Activated T-helper 1 cell treated with anti-CD3 and anti-CD28 coated beads, Interleukin-12 subunit alpha, Interleukin-12 subunit beta, Interleukin-2, Interleukin-4 antibody, amounts not matched to agents 30 ng/mL and 10 ng/mL and 1 ng/mL, durations not matched to agents 14 hours and 24 hours and 36 hours (primary cell): ENCODE measurements at regions of chr17 and their contacts with region 1.

Region 1: DNA sequence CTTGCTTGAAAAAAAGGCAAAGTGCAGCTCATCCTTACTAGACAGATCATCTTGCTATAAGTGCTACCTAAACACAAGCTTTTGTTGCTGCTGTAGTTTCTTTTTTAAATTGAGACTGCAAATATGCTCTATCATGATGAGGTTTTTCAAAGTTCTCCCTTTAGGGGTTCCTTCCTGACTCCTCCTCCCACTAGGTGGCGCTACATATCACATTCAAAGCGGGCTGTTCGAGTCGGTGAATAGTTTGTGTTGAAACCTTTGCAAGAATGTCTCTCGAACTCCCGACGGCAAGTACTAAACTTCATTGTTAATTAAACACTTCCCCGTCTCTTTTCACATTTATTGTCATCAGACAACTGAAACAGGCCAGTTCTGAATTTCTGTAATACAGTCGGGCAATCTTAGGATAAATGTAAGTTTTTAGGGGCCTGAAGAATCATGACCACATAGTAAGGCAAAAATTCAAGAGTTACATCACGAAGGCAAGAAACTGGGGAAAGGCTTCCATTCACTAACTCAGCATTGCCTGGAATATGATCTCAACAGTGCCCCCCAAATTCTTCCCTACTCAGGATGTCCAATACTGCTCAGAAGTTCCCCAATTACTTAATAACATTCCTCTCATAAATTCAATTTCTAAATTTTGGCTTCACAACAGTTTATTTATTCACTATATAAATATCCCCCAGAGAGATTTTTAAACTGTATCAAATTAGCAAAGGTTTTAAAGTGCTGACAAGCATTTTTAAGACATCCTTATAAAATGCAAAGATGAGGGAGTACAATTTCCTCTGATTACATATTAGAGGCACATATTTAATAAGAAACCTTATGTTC is 6.7 kb downstream of the HS3ST3A1 start:
- DNase-seq: peak; percentile 68
- H3K4me3 Mint-ChIP-seq: no peak overlapping the region
- H3K27ac Mint-ChIP-seq: no peak overlapping the region
- H3K4me1 Mint-ChIP-seq: peaks cover 7% of the 10 kb centered on the region
- H3K27me3 Mint-ChIP-seq: peaks cover 44% of the 10 kb centered on the region

Region 2: DNA sequence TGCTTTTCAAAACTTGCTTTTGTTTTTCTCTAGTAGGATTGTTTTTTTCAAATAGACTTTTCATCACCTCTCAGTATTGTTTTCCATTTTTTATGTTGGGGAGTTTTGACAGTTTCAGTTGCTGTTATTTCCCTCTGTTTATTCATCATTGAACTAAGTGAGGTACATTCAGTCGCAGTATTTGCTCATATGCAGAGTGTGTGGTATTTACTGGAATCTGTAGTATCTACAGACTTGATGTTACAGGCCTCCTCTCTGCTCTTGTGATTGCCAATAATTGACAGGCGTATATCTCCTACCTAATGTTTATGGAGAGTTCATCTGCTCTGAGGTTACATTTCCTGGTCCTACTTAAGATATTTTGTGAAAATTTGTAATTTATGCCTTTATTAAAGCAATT is 524.0 kb after region 1 on chr17:
- intact Hi-C with region 1: loop called (anchors 5 kb)
- DNase-seq: peak; percentile 31
- H3K4me3 Mint-ChIP-seq: peak overlapping the region; percentile 55
- H3K27ac Mint-ChIP-seq: peak overlapping the region; percentile 94
- H3K4me1 Mint-ChIP-seq: peaks cover 96% of the 10 kb centered on the region
- H3K27me3 Mint-ChIP-seq: no peaks in the 10 kb centered on the region

Region 3: DNA sequence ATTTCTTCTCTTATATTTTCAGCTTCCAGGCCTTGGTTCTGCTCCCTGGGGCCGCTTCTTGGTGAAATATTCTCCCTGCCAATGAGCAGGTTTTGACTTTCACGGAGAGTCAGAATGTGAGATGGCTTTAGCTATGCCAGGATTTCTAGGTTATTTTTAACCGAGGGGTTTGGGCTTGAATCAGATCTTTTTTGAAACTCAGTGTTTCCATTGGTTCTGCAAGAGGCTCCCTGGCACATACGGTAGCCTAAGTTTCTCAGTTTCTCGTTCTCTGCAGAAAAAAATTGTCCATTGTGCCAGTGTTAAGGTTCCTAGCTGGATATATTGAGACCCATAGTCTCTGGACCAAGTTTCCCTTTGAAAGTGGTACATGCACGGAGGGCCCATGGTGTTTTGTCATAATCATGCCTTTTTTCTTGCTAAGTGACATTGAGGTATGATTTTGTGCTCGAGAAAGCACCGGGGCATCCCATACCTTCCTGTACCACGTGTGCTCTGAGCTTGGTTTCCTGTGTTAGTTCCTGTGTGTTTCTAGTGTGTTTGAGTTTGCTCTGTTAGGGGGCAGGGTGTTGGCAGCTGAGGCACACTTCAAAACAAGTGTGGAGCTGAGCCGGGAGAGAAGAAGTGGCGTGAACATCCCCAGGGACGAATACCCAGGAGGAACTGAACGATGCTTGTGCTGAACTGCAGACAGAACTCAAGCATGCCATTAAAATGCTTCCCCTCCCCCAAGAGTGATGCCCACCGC is 833.1 kb after region 1 on chr17:
- intact Hi-C with region 1: loop called (anchors 10 kb)
- DNase-seq: peak; percentile 54
- H3K4me3 Mint-ChIP-seq: peak overlapping the region; percentile 63
- H3K27ac Mint-ChIP-seq: peak overlapping the region; percentile 76
- H3K4me1 Mint-ChIP-seq: peaks cover 41% of the 10 kb centered on the region
- H3K27me3 Mint-ChIP-seq: peaks cover 3% of the 10 kb centered on the region

Region 4: GRCh38 chr17:14784997-14785696 is 1190.2 kb after region 1 on chr17:
- intact Hi-C with region 1: loop called (anchors 10 kb)
- DNase-seq: no peak
- H3K4me3 Mint-ChIP-seq: no peak overlapping the region
- H3K27ac Mint-ChIP-seq: no peak overlapping the region
- H3K4me1 Mint-ChIP-seq: no peaks in the 10 kb centered on the region
- H3K27me3 Mint-ChIP-seq: peaks cover 2% of the 10 kb centered on the region

Region 5: GRCh38 chr17:14926526-14927122 is 1331.6 kb after region 1 on chr17:
- intact Hi-C with region 1: loop called (anchors 1 kb)
- DNase-seq: peak; percentile 31
- H3K4me3 Mint-ChIP-seq: no peak overlapping the region
- H3K27ac Mint-ChIP-seq: no peak overlapping the region
- H3K4me1 Mint-ChIP-seq: no peaks in the 10 kb centered on the region
- H3K27me3 Mint-ChIP-seq: no peaks in the 10 kb centered on the region